H1 (cell line): ENCODE measurements at regions of chr20 and their contacts with region 1.

Region 1: DNA sequence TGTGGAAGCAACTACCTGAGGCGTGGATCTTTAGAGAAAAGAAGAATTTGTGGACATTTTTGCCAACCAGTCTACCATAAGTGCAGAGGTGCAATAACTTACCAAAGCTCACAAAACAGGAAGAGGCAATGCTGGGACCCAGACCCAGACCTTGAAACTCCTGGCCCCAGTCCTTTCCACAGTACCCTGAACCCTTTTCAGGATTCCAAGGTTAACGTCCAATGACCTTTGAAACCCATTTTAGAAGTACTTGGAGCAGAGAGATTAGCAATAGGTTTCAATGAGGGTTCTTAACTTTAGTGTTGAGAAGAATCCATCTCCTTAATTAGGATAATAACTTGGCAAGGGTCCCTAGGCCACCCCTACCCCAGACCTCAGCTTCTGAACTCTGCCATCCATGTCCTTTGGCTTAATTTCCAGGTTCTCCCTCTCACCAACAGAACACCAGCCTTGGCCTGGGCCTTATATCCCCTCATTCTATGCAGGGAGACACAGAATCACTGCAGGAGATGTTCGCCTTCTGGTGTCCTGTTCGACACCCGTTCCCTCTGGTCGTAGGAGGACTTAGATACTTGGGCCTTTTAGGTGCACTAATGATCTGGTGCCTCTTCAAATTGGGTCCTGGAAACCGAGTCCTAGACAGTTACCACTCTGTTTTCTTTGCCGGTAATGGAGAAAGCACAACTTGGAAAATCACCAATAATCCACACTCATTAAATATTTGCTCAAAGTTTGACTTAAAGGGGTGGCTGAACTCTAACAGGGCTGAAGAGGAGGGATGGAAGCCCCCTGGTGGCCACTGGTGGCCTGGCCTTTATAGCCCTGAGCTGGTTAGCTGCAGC is 40.6 kb downstream of the ISM1 start:
- DNase-seq: peak; percentile 34 to 86
- H3K4me3 ChIP-seq: no peak overlapping the region
- H3K27ac ChIP-seq: no peak overlapping the region
- H3K4me1 ChIP-seq: peaks cover 0 to 2% (median 0%) of the 10 kb centered on the region in 4 experiments; a peak in 1 of 7 replicates
- H3K27me3 ChIP-seq: no peaks in the 10 kb centered on the region
- CTCF ChIP-seq: peak; percentile 86 to 93 (median 87)
- EP300 ChIP-seq: no peak
- POLR2A ChIP-seq: no peak
- RAD21 ChIP-seq: peak; percentile 68 to 82

Region 2: GRCh38 chr20:13111249-13111911 is 150.3 kb before region 1 on chr20:
- CTCF ChIA-PET with region 1: interaction called, 21 read pairs
- POLR2A ChIA-PET with region 1: no interaction called
- DNase-seq: no peak
- H3K4me3 ChIP-seq: no peak overlapping the region
- H3K27ac ChIP-seq: no peak overlapping the region
- H3K4me1 ChIP-seq: no peaks in the 10 kb centered on the region
- H3K27me3 ChIP-seq: no peaks in the 10 kb centered on the region
- CTCF ChIP-seq: no peak
- EP300 ChIP-seq: no peak
- POLR2A ChIP-seq: no peak
- RAD21 ChIP-seq: no peak

Region 3: GRCh38 chr20:13119583-13119982 is 142.1 kb before region 1 on chr20:
- CTCF ChIA-PET with region 1: interaction called, 41 read pairs
- POLR2A ChIA-PET with region 1: no interaction called
- DNase-seq: peak in 1 of 2 experiments; percentile 15
- H3K4me3 ChIP-seq: no peak overlapping the region
- H3K27ac ChIP-seq: no peak overlapping the region
- H3K4me1 ChIP-seq: no peaks in the 10 kb centered on the region; a peak in 1 of 7 replicates
- H3K27me3 ChIP-seq: no peaks in the 10 kb centered on the region
- CTCF ChIP-seq: peak in 2 of 3 experiments; percentile 86 to 89; a peak in 3 of 4 replicates
- EP300 ChIP-seq: no peak
- POLR2A ChIP-seq: no peak
- RAD21 ChIP-seq: peak; percentile 92 to 94

Region 4: GRCh38 chr20:13243826-13244376 is 17.8 kb before region 1 on chr20:
- CTCF ChIA-PET with region 1: interaction called, 22 read pairs
- POLR2A ChIA-PET with region 1: no interaction called
- DNase-seq: no peak
- H3K4me3 ChIP-seq: no peak overlapping the region
- H3K27ac ChIP-seq: no peak overlapping the region
- H3K4me1 ChIP-seq: no peaks in the 10 kb centered on the region; a peak in 1 of 7 replicates
- H3K27me3 ChIP-seq: no peaks in the 10 kb centered on the region; a peak in 2 of 7 replicates
- CTCF ChIP-seq: no peak
- EP300 ChIP-seq: no peak
- POLR2A ChIP-seq: no peak
- RAD21 ChIP-seq: no peak

Region 5: GRCh38 chr20:13251106-13251903 is 10.4 kb before region 1 on chr20:
- CTCF ChIA-PET with region 1: interaction called, 22 read pairs
- POLR2A ChIA-PET with region 1: interaction called, 4 read pairs
- DNase-seq: no peak
- H3K4me3 ChIP-seq: no peak overlapping the region
- H3K27ac ChIP-seq: no peak overlapping the region
- H3K4me1 ChIP-seq: no peaks in the 10 kb centered on the region; a peak in 1 of 7 replicates
- H3K27me3 ChIP-seq: no peaks in the 10 kb centered on the region
- CTCF ChIP-seq: no peak
- EP300 ChIP-seq: no peak
- POLR2A ChIP-seq: no peak
- RAD21 ChIP-seq: no peak

Region 6: DNA sequence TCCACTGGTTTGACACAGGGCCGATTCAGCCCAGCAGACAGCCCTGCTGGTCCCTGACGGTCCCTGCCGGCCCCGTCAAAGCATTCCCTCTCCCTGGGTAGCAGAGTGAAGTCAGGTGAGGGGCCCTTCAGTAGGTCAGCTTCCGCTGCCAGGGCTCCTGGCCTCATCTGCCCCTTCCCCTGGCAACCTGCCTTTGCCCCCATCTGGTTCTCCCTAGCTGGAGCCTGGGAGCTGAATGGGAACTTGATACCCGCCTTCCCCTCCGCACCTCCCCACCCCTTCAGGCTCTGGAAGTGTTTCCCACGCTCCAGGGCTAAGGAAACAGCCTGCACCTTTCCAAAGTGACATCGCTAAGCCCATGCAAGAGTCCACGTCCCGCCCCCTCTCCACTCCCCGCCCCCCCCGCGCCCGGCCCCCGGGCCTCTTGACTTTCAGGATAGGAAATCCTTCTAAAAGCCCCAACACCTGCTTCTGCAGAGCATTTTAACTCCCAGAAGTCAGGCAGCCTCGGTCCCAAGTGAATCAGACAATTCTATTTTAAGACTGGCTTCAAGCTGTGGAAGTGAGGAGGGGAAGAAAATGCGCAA is 12.7 kb after region 1 on chr20:
- CTCF ChIA-PET with region 1: interaction called, 22 read pairs
- POLR2A ChIA-PET with region 1: interaction called, 3 read pairs
- DNase-seq: peak; percentile 19 to 70
- H3K4me3 ChIP-seq: peak overlapping the region in 1 of 4 experiments; percentile 36; a peak in 2 of 8 replicates
- H3K27ac ChIP-seq: no peak overlapping the region
- H3K4me1 ChIP-seq: peaks cover 2 to 6% (median 3%) of the 10 kb centered on the region in 4 experiments; a peak in 3 of 7 replicates
- H3K27me3 ChIP-seq: no peaks in the 10 kb centered on the region; a peak in 1 of 7 replicates
- CTCF ChIP-seq: no peak
- EP300 ChIP-seq: no peak
- POLR2A ChIP-seq: no peak
- RAD21 ChIP-seq: no peak

Region 7: DNA sequence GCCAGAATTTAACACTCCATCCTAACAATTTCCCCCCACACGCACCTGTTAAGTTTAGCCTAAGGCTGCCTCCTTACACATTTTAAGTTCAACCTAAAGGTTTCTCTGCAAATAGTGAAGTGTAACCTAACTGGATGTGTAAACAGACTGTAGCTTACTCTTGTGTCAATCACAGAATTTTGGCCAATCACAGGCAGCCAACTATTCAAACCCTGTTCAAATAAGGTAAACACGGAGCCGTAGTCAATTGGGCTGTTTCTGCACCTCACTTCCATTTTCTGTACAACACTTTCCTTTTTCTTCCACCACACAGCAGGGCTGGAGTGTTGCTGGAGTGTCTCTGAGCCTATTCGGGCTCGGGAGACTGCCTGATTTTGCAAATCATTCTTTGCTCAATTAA is 51.5 kb after region 1 on chr20:
- CTCF ChIA-PET with region 1: no interaction called
- POLR2A ChIA-PET with region 1: no interaction called
- DNase-seq: no peak
- H3K4me3 ChIP-seq: no peak overlapping the region
- H3K27ac ChIP-seq: no peak overlapping the region
- H3K4me1 ChIP-seq: no peaks in the 10 kb centered on the region
- H3K27me3 ChIP-seq: no peaks in the 10 kb centered on the region
- CTCF ChIP-seq: no peak
- EP300 ChIP-seq: no peak
- POLR2A ChIP-seq: no peak
- RAD21 ChIP-seq: no peak

Region 8: GRCh38 chr20:13348311-13349234 is 86.9 kb after region 1 on chr20:
- CTCF ChIA-PET with region 1: no interaction called
- POLR2A ChIA-PET with region 1: no interaction called
- DNase-seq: no peak
- H3K4me3 ChIP-seq: no peak overlapping the region
- H3K27ac ChIP-seq: no peak overlapping the region
- H3K4me1 ChIP-seq: no peaks in the 10 kb centered on the region; a peak in 1 of 7 replicates
- H3K27me3 ChIP-seq: no peaks in the 10 kb centered on the region
- CTCF ChIP-seq: no peak
- EP300 ChIP-seq: no peak
- POLR2A ChIP-seq: no peak
- RAD21 ChIP-seq: no peak